Heart right ventricle (tissue), 16 donors: ENCODE measurements at regions of chr19 and their contacts with region 1.

Region 1: DNA sequence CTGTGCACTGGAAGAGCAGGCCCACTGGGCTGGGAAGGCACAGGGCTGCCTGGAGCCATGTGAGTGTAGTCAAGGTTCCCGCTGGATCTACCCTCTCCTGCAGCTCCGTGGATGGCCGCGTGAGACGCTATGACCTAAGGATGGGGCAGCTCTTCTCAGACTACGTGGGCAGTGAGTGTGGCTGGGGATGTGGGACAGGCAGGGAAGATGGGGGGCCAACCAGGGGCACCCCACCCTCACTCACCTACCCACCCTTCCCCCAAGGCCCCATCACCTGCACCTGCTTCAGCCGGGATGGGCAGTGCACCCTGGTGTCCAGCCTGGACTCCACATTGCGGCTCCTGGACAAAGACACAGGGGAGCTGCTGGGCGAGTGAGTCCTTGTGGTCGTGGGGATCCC is 6.1 kb downstream of the WDR83 start:
- DNase-seq: no peak
- ATAC-seq: no peak
- H3K4me3 ChIP-seq: no peak overlapping the region
- H3K27ac ChIP-seq: no peak overlapping the region
- H3K4me1 ChIP-seq: peaks cover 9 to 38% (median 25%) of the 10 kb centered on the region in 9 donors
- H3K27me3 ChIP-seq: no peaks in the 10 kb centered on the region
- CTCF ChIP-seq: no peak

Region 2: DNA sequence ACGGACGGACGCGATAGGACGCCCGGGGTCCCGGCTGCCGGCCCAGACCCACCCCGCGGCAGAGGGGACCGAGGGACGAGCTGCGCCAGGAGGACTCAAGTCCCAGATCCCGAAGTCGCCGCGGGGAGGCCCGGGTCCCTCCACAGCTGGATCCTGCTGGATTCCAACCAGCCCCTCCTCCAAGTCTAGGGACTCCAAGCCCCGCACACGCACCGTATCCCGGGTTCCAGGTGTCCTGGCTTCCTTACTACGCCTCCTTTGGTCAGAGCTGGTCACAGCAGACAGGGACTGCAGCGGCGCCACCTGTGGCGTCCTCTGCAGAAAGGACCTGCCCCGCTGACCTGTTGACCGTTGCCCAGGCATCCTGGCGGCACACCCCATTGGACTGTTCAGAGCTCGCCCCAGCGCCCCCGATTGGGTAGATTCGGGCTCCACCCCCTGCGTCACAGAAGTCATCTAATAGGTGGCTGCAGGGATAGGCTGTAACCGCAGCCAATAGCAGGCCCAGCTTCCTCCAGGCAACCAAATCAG is 159.1 kb before region 1 on chr19:
- intact Hi-C with region 1: no loop called
- DNase-seq: peak in 1 of 2 donors; percentile 17
- ATAC-seq: peak in 6 of 8 donors; percentile 21 to 90 (median 58)
- H3K4me3 ChIP-seq: peak overlapping the region in 5 of 10 donors; percentile 27 to 36 (median 32)
- H3K27ac ChIP-seq: no peak overlapping the region
- H3K4me1 ChIP-seq: no peaks in the 10 kb centered on the region
- H3K27me3 ChIP-seq: no peaks in the 10 kb centered on the region
- CTCF ChIP-seq: peak in 3 of 9 donors; percentile 8 to 32 (median 20)

Region 3: DNA sequence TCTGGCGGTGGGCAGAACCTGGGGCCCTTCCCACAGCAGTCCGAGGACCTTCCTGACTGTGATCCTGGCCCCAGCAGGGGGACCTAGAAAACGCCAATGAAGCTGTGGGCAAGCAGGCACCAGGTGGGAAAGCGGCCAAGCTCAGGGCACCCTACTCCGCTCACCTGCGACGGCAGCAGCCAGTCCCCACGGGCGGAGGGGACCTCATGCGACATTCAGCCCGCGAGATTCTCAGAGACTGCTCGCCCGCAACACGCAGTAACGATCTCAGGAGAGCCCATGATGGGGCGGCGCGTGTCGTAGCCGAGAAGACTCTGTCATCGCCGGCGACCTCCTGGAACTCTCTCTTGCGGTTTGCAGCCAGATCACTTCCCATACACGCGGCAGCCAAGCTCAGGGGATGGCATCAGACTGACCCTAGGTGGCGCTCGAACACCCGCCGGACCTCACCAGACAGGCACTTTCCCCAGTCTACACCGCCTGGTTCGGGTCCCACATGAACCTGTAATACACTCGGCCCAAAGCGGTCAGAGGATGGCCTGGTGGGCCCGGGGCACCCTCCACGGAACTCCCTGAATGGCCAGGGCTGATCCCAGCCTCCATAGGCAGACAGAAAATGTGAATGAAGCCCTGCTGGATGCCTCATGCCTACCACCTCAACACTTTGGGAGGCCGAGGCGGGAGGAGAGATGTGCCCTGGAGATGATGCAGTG is 32.7 kb before region 1 on chr19:
- intact Hi-C with region 1: loop called in 1 of 10 experiments (anchors 2 kb)
- DNase-seq: peak; percentile 81 to 84
- ATAC-seq: peak; percentile 89 to 95 (median 90)
- H3K4me3 ChIP-seq: peak overlapping the region in 8 of 10 donors; percentile 16 to 41 (median 36)
- H3K27ac ChIP-seq: peak overlapping the region in 1 of 10 donors; percentile 59
- H3K4me1 ChIP-seq: peaks cover 0 to 13% (median 9%) of the 10 kb centered on the region in 9 donors
- H3K27me3 ChIP-seq: no peaks in the 10 kb centered on the region
- CTCF ChIP-seq: peak; percentile 70 to 91 (median 81)

Region 4: DNA sequence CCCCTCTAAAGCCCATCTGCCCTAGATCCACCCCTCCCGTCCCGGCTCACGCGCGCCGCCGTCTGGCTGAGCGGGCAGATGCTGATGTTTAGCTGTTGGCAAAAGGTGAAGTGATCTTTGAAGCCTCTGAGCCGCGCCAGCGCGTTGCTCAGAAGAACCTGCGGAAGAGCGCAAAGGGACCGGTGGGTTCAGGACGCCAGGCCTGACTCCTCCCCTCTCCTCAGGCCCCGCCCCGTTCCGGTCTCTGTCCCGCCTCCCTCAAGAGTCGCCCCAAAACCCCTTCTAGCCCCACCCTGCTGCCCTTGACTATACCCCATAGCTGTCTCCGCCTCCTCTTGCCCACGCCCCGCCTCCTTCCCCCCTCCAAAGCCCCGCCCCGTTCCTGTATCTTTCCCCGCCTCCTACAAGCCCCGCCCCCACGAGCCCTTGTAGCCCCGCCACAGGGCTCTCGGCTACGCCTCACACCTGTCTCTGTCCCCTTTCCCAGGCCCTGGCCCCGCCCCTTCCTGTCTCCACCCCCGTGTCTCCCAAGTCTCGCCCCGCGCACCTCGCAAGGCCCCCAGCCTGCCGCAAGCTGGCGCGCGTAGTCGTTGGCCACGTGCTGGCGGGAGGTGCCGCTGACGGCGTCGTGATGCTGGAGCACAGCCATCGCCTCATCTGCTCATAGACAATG is 15.7 kb before region 1 on chr19:
- intact Hi-C with region 1: no loop called
- DNase-seq: no peak
- ATAC-seq: peak in 2 of 8 donors; percentile 29 to 39
- H3K4me3 ChIP-seq: no peak overlapping the region
- H3K27ac ChIP-seq: no peak overlapping the region
- H3K4me1 ChIP-seq: no peaks in the 10 kb centered on the region
- H3K27me3 ChIP-seq: no peaks in the 10 kb centered on the region
- CTCF ChIP-seq: no peak